H1 (cell line): ENCODE measurements at regions of chr10 and their contacts with region 1.

Region 1: DNA sequence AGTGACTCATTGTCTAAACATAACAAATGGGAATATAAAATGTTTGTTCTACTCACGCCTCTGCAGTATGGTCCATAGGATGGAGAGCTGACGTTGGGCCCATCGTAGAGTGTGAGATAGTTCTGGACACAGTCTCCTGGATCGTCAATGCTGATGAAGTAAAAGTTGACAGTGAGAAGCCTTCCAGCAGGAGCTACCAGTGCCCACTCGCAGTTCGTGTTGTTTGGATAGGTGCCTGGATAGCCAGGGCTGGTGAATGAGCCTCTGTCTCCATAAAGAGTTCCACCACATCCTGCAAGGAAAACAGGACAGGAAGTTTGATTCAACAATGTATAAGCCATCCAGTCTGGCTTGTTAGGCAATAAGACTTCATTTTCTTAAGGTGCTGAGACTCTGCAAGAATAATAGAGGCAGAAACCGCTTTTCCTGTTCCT is 79.6 kb downstream of the OR13A1 start:
- DNase-seq: no peak
- H3K4me3 ChIP-seq: no peak overlapping the region
- H3K27ac ChIP-seq: no peak overlapping the region
- H3K4me1 ChIP-seq: no peaks in the 10 kb centered on the region
- H3K27me3 ChIP-seq: peaks cover 0 to 1% (median 0%) of the 10 kb centered on the region in 4 experiments; a peak in 1 of 7 replicates
- CTCF ChIP-seq: no peak
- EP300 ChIP-seq: no peak
- POLR2A ChIP-seq: no peak
- RAD21 ChIP-seq: no peak

Region 2: GRCh38 chr10:44874166-44874565 is 361.6 kb before region 1 on chr10:
- CTCF ChIA-PET with region 1: no interaction called
- POLR2A ChIA-PET with region 1: no interaction called
- DNase-seq: no peak
- H3K4me3 ChIP-seq: no peak overlapping the region
- H3K27ac ChIP-seq: no peak overlapping the region
- H3K4me1 ChIP-seq: peaks cover 0 to 2% (median under 1%) of the 10 kb centered on the region in 4 experiments; a peak in 4 of 7 replicates
- H3K27me3 ChIP-seq: no peaks in the 10 kb centered on the region; a peak in 2 of 7 replicates
- CTCF ChIP-seq: no peak
- EP300 ChIP-seq: no peak
- POLR2A ChIP-seq: no peak
- RAD21 ChIP-seq: no peak

Region 3: GRCh38 chr10:45204954-45205775 is 30.6 kb before region 1 on chr10:
- CTCF ChIA-PET with region 1: no interaction called
- POLR2A ChIA-PET with region 1: no interaction called
- DNase-seq: no peak
- H3K4me3 ChIP-seq: no peak overlapping the region
- H3K27ac ChIP-seq: no peak overlapping the region
- H3K4me1 ChIP-seq: no peaks in the 10 kb centered on the region
- H3K27me3 ChIP-seq: no peaks in the 10 kb centered on the region
- CTCF ChIP-seq: no peak
- EP300 ChIP-seq: no peak
- POLR2A ChIP-seq: no peak
- RAD21 ChIP-seq: no peak

Region 4: DNA sequence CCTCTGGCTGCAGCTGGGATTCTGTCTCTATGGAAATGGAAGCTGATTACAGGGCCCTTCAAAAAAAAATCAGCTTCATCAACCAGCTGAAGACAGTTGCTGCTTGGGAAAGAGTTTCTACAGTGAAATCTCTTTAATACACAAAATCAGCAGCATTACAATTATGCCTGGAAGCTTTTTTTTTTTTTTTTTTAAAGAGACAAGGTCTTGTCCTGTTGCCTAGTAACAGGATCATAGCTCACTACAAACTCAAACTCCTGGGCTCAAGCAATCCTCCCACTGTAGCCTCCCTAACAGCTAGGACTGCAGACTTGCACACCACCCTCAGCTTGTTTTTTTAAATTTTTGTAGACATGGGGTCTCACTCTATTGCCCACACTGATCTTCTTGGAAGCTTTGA is 14.9 kb before region 1 on chr10:
- CTCF ChIA-PET with region 1: interaction called, 14 read pairs
- POLR2A ChIA-PET with region 1: no interaction called
- DNase-seq: no peak
- H3K4me3 ChIP-seq: no peak overlapping the region
- H3K27ac ChIP-seq: no peak overlapping the region
- H3K4me1 ChIP-seq: no peaks in the 10 kb centered on the region
- H3K27me3 ChIP-seq: no peaks in the 10 kb centered on the region; a peak in 1 of 7 replicates
- CTCF ChIP-seq: no peak
- EP300 ChIP-seq: no peak
- POLR2A ChIP-seq: no peak
- RAD21 ChIP-seq: no peak

Region 5: DNA sequence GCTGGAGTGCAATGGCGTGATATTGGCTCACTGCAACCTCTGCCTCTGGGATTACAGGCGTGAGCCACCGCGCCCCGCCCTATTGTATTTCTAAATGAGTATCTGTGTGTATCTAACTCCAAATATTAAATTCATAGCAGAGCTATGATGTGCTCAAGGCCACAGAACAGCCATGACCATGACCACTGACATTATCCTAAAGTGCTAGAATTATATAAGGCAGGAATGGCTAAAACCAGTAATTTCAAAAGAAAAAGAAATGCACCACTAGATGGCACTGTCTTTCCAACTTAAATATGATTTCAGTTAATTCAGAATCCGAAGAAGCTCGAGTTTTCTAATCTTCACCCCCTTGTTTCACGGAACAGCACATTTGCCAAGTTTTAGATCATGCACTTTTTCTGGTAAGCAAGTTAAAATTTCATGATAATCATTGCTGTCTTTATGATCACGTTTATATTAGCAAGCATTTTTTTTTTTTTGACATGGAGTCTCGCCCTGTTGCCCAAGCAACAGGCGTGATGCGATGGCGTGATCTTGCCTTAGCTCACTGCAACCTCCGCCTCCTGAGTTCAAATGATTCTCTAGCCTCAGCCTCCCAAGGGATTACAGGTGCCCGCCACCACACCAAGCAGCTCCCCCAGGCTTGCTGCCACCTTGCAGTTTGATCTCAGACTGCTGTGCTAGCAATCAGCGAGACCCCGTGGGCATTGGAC is 14.3 kb after region 1 on chr10:
- CTCF ChIA-PET with region 1: interaction called, 20 read pairs
- POLR2A ChIA-PET with region 1: no interaction called
- DNase-seq: peak in 1 of 2 experiments; percentile 64
- H3K4me3 ChIP-seq: peak overlapping the region; percentile 9 to 62 (median 32); a peak in 5 of 8 replicates
- H3K27ac ChIP-seq: no peak overlapping the region
- H3K4me1 ChIP-seq: no peaks in the 10 kb centered on the region
- H3K27me3 ChIP-seq: no peaks in the 10 kb centered on the region
- CTCF ChIP-seq: peak in 2 of 3 experiments; percentile 9 to 43; a peak in 2 of 4 replicates
- EP300 ChIP-seq: no peak
- POLR2A ChIP-seq: no peak
- RAD21 ChIP-seq: peak; percentile 58 to 68

Region 6: GRCh38 chr10:45274364-45274763 is 38.5 kb after region 1 on chr10:
- CTCF ChIA-PET with region 1: no interaction called
- POLR2A ChIA-PET with region 1: no interaction called
- DNase-seq: no peak
- H3K4me3 ChIP-seq: no peak overlapping the region
- H3K27ac ChIP-seq: no peak overlapping the region
- H3K4me1 ChIP-seq: no peaks in the 10 kb centered on the region
- H3K27me3 ChIP-seq: no peaks in the 10 kb centered on the region
- CTCF ChIP-seq: no peak
- EP300 ChIP-seq: no peak
- POLR2A ChIP-seq: no peak
- RAD21 ChIP-seq: no peak